ENCODE measurements at regions of chr9 and their contacts with region 1.

Region 1: GRCh38 chr9:128992995-128993394 is 35.1 kb downstream of the SH3GLB2 start:
- DNase-seq: no peak
- ATAC-seq: no peak
- H3K4me3 ChIP-seq: no peak overlapping the region
- H3K4me3 Mint-ChIP-seq: no peak overlapping the region
- H3K27ac ChIP-seq: no peak overlapping the region
- H3K27ac Mint-ChIP-seq: no peak overlapping the region
- H3K4me1 ChIP-seq: no peaks in the 10 kb centered on the region
- H3K4me1 Mint-ChIP-seq: no peaks in the 10 kb centered on the region
- H3K27me3 ChIP-seq: no peaks in the 10 kb centered on the region
- H3K27me3 Mint-ChIP-seq: no peaks in the 10 kb centered on the region
- CTCF ChIP-seq: no peak

Region 2: GRCh38 chr9:128972956-128973355 is 20.0 kb before region 1 on chr9:
- CTCF ChIA-PET with region 1: no interaction called
- POLR2A ChIA-PET with region 1: no interaction called
- intact Hi-C with region 1: no loop called
- DNase-seq: no peak
- ATAC-seq: no peak
- H3K4me3 ChIP-seq: no peak overlapping the region
- H3K4me3 Mint-ChIP-seq: no peak overlapping the region
- H3K27ac ChIP-seq: no peak overlapping the region
- H3K27ac Mint-ChIP-seq: no peak overlapping the region
- H3K4me1 ChIP-seq: no peaks in the 10 kb centered on the region
- H3K4me1 Mint-ChIP-seq: no peaks in the 10 kb centered on the region
- H3K27me3 ChIP-seq: no peaks in the 10 kb centered on the region
- H3K27me3 Mint-ChIP-seq: no peaks in the 10 kb centered on the region
- CTCF ChIP-seq: no peak

Region 3: GRCh38 chr9:129006328-129007034 is 13.5 kb after region 1 on chr9:
- CTCF ChIA-PET with region 1: interaction called, 10 read pairs
- POLR2A ChIA-PET with region 1: no interaction called
- intact Hi-C with region 1: no loop called
- DNase-seq: peak in 8 of 9 experiments; percentile 17 to 66 (median 44)
- ATAC-seq: peak; percentile 72
- H3K4me3 ChIP-seq: no peak overlapping the region
- H3K4me3 Mint-ChIP-seq: no peak overlapping the region
- H3K27ac ChIP-seq: no peak overlapping the region
- H3K27ac Mint-ChIP-seq: no peak overlapping the region
- H3K4me1 ChIP-seq: no peaks in the 10 kb centered on the region
- H3K4me1 Mint-ChIP-seq: no peaks in the 10 kb centered on the region
- H3K27me3 ChIP-seq: no peaks in the 10 kb centered on the region
- H3K27me3 Mint-ChIP-seq: no peaks in the 10 kb centered on the region
- CTCF ChIP-seq: peak; percentile 66